ENCODE measurements at regions of chr9 and their contacts with region 1.

Region 1: DNA sequence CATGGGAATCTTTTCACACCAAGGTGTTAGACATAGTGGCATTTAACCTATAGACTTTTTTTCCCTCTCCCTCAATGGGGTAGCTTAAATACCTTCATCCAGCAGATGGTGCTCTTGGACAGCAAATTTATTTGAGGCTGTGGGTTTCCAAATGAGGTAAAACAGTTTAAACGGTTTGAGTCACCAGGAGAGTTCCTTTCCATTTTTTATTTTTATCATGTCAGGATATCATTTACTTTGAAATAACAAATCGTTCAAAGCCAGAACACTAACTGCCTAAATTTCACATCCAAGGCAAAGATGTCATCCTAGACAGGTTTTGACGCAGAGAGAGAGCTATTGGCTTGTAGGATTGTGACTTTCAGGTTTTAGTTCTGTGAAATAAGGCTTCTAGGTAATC is 69.7 kb downstream of the KDM4C start:
- DNase-seq: no peak
- ATAC-seq: no peak
- H3K4me3 ChIP-seq: no peak overlapping the region
- H3K27ac ChIP-seq: no peak overlapping the region
- H3K4me1 ChIP-seq: no peaks in the 10 kb centered on the region
- H3K27me3 ChIP-seq: no peaks in the 10 kb centered on the region
- CTCF ChIP-seq: peak in 11 of 12 donors; percentile 20 to 60 (median 51)
- POLR2A ChIP-seq: no peak

Region 2: GRCh38 chr9:6667633-6668280 is 159.7 kb before region 1 on chr9:
- intact Hi-C with region 1: loop called in 1 of 10 experiments (anchors 5 kb)
- DNase-seq: no peak
- ATAC-seq: no peak
- H3K4me3 ChIP-seq: no peak overlapping the region
- H3K27ac ChIP-seq: no peak overlapping the region
- H3K4me1 ChIP-seq: no peaks in the 10 kb centered on the region
- H3K27me3 ChIP-seq: no peaks in the 10 kb centered on the region
- CTCF ChIP-seq: peak; percentile 25 to 65 (median 48)
- POLR2A ChIP-seq: no peak

Region 3: GRCh38 chr9:6960777-6961176 is 133.3 kb after region 1 on chr9:
- intact Hi-C with region 1: no loop called
- DNase-seq: no peak
- ATAC-seq: no peak
- H3K4me3 ChIP-seq: no peak overlapping the region
- H3K27ac ChIP-seq: no peak overlapping the region
- H3K4me1 ChIP-seq: peaks cover 0 to 10% (median under 1%) of the 10 kb centered on the region in 12 donors
- H3K27me3 ChIP-seq: no peaks in the 10 kb centered on the region
- CTCF ChIP-seq: no peak
- POLR2A ChIP-seq: no peak

Region 4: DNA sequence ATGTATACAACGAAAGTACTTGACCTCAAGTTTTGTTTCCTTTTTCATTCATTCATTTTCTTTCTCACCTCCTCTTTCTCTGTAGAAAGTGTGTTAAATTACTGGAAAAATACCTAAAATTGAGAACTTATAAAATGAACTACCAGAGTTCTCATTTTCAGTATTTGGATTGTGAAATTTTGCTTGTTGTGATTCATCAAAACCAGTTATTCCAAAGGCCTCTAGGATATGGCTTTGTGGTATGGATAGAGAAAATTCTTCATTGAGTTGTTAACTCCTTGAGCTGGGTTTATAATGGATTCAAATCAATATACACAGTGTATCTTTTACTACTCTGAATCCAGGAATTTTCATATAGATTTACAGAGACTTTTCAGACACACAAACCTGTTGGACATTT is 217.9 kb after region 1 on chr9:
- intact Hi-C with region 1: loop called in 2 of 10 experiments (anchors 5 kb)
- DNase-seq: no peak
- ATAC-seq: no peak
- H3K4me3 ChIP-seq: no peak overlapping the region
- H3K27ac ChIP-seq: no peak overlapping the region
- H3K4me1 ChIP-seq: no peaks in the 10 kb centered on the region
- H3K27me3 ChIP-seq: no peaks in the 10 kb centered on the region
- CTCF ChIP-seq: no peak
- POLR2A ChIP-seq: no peak

Region 5: GRCh38 chr9:7055201-7055903 is 227.9 kb after region 1 on chr9:
- intact Hi-C with region 1: loop called in 1 of 10 experiments (anchors 5 kb)
- DNase-seq: no peak
- ATAC-seq: no peak
- H3K4me3 ChIP-seq: no peak overlapping the region
- H3K27ac ChIP-seq: no peak overlapping the region
- H3K4me1 ChIP-seq: peaks cover 0 to 8% (median 0%) of the 10 kb centered on the region in 12 donors
- H3K27me3 ChIP-seq: no peaks in the 10 kb centered on the region
- CTCF ChIP-seq: no peak
- POLR2A ChIP-seq: no peak